Activated CD8-positive, alpha-beta T cell treated with anti-CD3 and anti-CD28 coated beads for 36 hours (primary cell): ENCODE measurements at regions of chr15 and their contacts with region 1.

Region 1: GRCh38 chr15:73677146-73677607 is 7.0 kb upstream of the CD276 start:
- DNase-seq: peak; percentile 59
- ATAC-seq: peak; percentile 79
- H3K4me3 Mint-ChIP-seq: no peak overlapping the region
- H3K27ac Mint-ChIP-seq: no peak overlapping the region
- H3K4me1 Mint-ChIP-seq: peaks cover 8% of the 10 kb centered on the region
- H3K27me3 Mint-ChIP-seq: peaks cover 30% of the 10 kb centered on the region
- CTCF ChIP-seq: peak; percentile 85

Region 2: DNA sequence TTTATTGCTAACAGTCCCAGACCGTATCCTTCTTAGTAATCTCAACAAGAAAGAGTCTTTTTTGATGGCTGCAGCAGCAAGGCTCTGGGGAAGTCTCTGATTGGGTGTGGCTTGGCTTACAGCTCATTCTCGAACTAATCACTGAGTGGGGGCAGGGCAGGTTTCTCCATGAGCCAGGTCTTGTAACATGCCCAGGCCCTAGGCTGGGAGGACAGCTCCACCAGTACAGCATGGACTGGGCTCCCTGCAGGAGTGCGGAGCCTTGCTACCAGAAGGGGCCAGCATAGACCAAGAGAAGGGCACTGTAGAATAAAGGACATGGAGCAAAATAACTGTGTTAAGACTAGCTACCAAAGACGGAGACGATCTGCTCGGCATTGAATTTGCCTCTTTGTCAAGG is 14.2 kb after region 1 on chr15:
- CTCF ChIA-PET with region 1: interaction called, 165 read pairs
- POLR2A ChIA-PET with region 1: no interaction called
- intact Hi-C with region 1: no loop called
- DNase-seq: no peak
- ATAC-seq: no peak
- H3K4me3 Mint-ChIP-seq: no peak overlapping the region
- H3K27ac Mint-ChIP-seq: no peak overlapping the region
- H3K4me1 Mint-ChIP-seq: peaks cover under 1% of the 10 kb centered on the region
- H3K27me3 Mint-ChIP-seq: peaks cover 42% of the 10 kb centered on the region
- CTCF ChIP-seq: no peak

Region 3: DNA sequence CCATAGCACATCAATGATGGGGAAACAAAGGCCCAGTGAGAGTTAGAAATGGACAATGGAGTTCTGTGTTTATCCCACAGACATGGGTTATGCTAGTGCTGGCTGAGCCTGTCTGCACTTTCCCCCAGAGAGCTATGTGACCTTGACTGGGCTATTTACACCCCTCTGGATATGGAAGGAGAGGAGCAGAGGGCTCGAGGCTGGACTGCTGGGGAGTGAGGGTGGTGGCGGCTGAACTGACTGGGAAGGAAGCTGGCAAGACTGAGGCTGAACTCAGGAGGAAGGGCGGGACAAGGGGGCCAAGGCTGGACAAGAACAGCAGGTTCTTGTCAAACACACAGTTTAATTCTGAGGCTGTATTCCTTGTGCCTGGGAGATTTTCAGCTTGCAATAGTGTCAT is 86.8 kb after region 1 on chr15:
- CTCF ChIA-PET with region 1: no interaction called
- POLR2A ChIA-PET with region 1: no interaction called
- intact Hi-C with region 1: no loop called
- DNase-seq: no peak
- ATAC-seq: no peak
- H3K4me3 Mint-ChIP-seq: no peak overlapping the region
- H3K27ac Mint-ChIP-seq: no peak overlapping the region
- H3K4me1 Mint-ChIP-seq: no peaks in the 10 kb centered on the region
- H3K27me3 Mint-ChIP-seq: peaks cover 8% of the 10 kb centered on the region
- CTCF ChIP-seq: no peak